ENCODE measurements at regions of chr4 and their contacts with region 1.

Region 1: GRCh38 chr4:169802873-169803272 is 45.1 kb upstream of the HPF1 start:
- DNase-seq: no peak
- ATAC-seq: no peak
- H3K4me3 ChIP-seq: no peak overlapping the region
- H3K27ac ChIP-seq: no peak overlapping the region
- H3K4me1 ChIP-seq: no peaks in the 10 kb centered on the region
- H3K27me3 ChIP-seq: no peaks in the 10 kb centered on the region
- CTCF ChIP-seq: no peak
- POLR2A ChIP-seq: no peak

Region 2: GRCh38 chr4:170014359-170015011 is 211.6 kb after region 1 on chr4:
- intact Hi-C with region 1: no loop called
- DNase-seq: no peak
- ATAC-seq: peak in 1 of 4 donors; percentile 12
- H3K4me3 ChIP-seq: no peak overlapping the region
- H3K27ac ChIP-seq: no peak overlapping the region
- H3K4me1 ChIP-seq: peaks cover 0 to 11% (median 3%) of the 10 kb centered on the region in 4 donors
- H3K27me3 ChIP-seq: no peaks in the 10 kb centered on the region
- CTCF ChIP-seq: no peak
- POLR2A ChIP-seq: no peak

Region 3: DNA sequence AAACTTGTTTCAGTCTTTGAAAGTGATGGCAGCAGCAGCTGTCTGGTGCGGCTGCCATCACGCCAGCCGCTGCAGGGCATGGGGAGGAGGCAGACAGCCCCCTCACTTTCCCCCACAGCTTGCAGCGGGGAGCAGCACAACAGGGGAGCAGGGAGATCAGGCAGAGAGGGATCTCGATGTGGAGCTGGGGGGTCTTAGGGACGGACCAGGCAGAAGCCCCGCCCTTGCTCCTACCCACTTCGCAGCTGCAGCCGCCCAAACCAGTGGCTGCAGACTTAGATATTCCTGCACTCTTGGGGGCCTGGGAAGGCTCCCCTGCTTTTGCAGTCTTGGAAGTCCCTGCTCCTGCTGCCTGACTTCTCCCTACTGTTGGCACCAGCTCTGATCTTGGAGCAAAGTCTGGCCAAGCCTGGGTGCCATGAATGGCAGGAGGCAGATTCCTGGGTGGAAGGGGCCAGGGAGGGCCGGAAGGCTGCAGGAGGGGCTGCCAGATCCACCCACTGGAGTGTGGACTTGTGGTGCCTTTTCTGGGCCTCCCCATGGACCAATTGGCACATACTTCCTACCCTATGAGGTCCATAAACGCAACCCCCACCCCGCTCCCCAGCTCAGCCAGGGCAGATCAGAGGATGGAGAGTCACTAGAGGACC is 237.3 kb after region 1 on chr4:
- intact Hi-C with region 1: loop called in 1 of 2 experiments (anchors 5 kb)
- DNase-seq: no peak
- ATAC-seq: peak in 1 of 4 donors; percentile 24
- H3K4me3 ChIP-seq: no peak overlapping the region
- H3K27ac ChIP-seq: no peak overlapping the region
- H3K4me1 ChIP-seq: peaks cover 0 to 15% (median 0%) of the 10 kb centered on the region in 4 donors
- H3K27me3 ChIP-seq: no peaks in the 10 kb centered on the region
- CTCF ChIP-seq: no peak
- POLR2A ChIP-seq: no peak

Region 4: GRCh38 chr4:170089668-170090351 is 286.9 kb after region 1 on chr4 and contains the start of gene AADAT:
- intact Hi-C with region 1: no loop called
- DNase-seq: peak; percentile 92 to 96 (median 95)
- ATAC-seq: peak; percentile 95 to 98 (median 98)
- H3K4me3 ChIP-seq: peak within 1 kb of the TSS; percentile 53 to 66 (median 62)
- H3K27ac ChIP-seq: peak within 1 kb of the TSS; percentile 38 to 74 (median 65)
- H3K4me1 ChIP-seq: peaks cover 0 to 18% (median 0%) of the 10 kb centered on the region in 4 donors
- H3K27me3 ChIP-seq: no peaks in the 10 kb centered on the region
- CTCF ChIP-seq: peak; percentile 77 to 92 (median 86)
- POLR2A ChIP-seq: peak; percentile 32
- total RNA-seq, gene AADAT: 5.6 to 43.3 (median 19.5) TPM